PC-3 (cell line): ENCODE measurements at regions of chr11 and their contacts with region 1.

Region 1: GRCh38 chr11:102614485-102614884 is 10.6 kb downstream of the MMP20 start:
- DNase-seq: peak; percentile 35
- ATAC-seq: no peak
- H3K4me3 ChIP-seq: no peak overlapping the region
- H3K27ac ChIP-seq: no peak overlapping the region
- H3K4me1 ChIP-seq: peaks cover 6% of the 10 kb centered on the region
- H3K27me3 ChIP-seq: no peaks in the 10 kb centered on the region
- CTCF ChIP-seq: peak; percentile 53; the same call in 1 of the 2 replicates

Region 2: DNA sequence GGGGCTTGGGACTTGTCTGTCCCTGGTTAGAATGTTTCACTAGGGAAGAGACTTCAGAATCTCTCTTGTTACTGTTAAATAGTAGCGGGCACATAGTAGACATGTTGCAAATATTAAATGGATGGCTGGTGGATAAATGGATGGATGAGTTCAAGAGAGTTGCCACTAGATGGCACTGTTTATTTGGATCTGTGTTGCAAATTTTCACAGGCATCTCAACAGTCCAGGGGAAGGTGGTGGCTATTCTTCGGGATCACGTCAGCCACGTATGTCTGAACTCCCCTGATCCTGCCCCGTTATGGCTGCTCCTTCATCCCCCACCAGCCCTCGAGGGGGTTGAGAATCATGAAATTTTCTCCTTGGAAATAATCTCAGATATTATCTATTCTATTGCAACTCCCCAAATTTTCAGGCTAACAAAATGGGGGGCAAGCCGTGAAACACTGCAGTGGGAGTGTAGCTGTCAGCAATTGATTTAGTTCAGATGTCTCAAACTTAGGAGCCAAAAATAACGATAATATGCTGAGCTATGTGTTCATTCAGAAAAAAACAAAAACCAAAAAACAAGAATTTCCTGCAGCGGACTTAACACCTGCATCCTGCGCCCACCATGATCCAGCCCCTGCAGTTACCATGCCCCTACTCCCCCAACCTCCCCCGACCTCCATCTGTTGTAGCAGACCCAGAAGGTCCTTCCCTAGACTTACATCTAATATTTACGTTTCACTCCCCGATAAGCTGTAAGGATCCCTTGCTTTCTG is 326.3 kb before region 1 on chr11:
- CTCF ChIA-PET with region 1: no interaction called
- POLR2A ChIA-PET with region 1: no interaction called
- intact Hi-C with region 1: loop called (anchors 1 kb)
- DNase-seq: peak; percentile 96
- ATAC-seq: peak; percentile 70
- H3K4me3 ChIP-seq: peak overlapping the region; percentile 52
- H3K27ac ChIP-seq: peak overlapping the region; percentile 13
- H3K4me1 ChIP-seq: peaks cover 40% of the 10 kb centered on the region
- H3K27me3 ChIP-seq: no peaks in the 10 kb centered on the region
- CTCF ChIP-seq: peak; percentile 93

Region 3: GRCh38 chr11:102367364-102367763 is 247.1 kb before region 1 on chr11:
- CTCF ChIA-PET with region 1: interaction called, 6 read pairs
- POLR2A ChIA-PET with region 1: no interaction called
- intact Hi-C with region 1: loop called (anchors 2 kb)
- DNase-seq: peak; percentile 59
- ATAC-seq: peak; percentile 37; the same call in 1 of the 2 replicates
- H3K4me3 ChIP-seq: no peak overlapping the region
- H3K27ac ChIP-seq: no peak overlapping the region
- H3K4me1 ChIP-seq: no peaks in the 10 kb centered on the region
- H3K27me3 ChIP-seq: no peaks in the 10 kb centered on the region
- CTCF ChIP-seq: peak; percentile 64

Region 4: GRCh38 chr11:102451681-102452460 is 162.6 kb before region 1 on chr11:
- CTCF ChIA-PET with region 1: no interaction called
- POLR2A ChIA-PET with region 1: no interaction called
- intact Hi-C with region 1: loop called (anchors 5 kb)
- DNase-seq: peak; percentile 67
- ATAC-seq: peak; percentile 49
- H3K4me3 ChIP-seq: peak overlapping the region; percentile 81
- H3K27ac ChIP-seq: peak overlapping the region; percentile 65
- H3K4me1 ChIP-seq: peaks cover 56% of the 10 kb centered on the region
- H3K27me3 ChIP-seq: no peaks in the 10 kb centered on the region
- CTCF ChIP-seq: peak; percentile 44; the same call in 1 of the 2 replicates

Region 5: DNA sequence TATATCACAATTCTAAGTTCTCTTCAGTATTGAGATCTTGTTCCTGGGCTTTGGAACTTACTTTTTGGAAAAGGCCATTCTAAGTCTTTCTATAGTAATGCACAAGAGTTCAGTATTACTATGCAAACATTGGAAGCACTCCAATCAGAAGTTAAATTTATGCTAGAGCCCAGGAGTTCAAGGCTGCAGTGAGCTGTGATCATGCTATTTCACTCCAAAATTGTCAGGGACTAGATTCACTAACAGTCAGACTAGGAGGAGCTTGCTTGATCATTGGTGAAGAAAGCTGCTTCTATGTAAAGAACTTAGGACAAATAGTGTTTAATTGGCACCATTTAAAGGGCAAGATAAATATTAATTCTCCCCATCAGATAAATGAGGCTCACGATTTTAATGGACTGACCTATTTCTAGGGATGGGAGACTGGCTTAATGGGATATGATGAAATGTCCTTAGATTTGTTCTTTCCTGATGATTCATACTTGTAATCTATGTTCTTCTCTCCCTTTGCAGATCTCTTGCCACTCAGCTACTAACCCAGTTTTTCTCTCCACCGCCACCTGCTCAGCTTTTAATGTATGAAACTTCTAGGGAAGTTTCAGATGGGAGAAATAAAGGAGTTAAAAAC is 129.3 kb before region 1 on chr11:
- CTCF ChIA-PET with region 1: no interaction called
- POLR2A ChIA-PET with region 1: no interaction called
- intact Hi-C with region 1: no loop called
- DNase-seq: no peak
- ATAC-seq: peak; percentile 61
- H3K4me3 ChIP-seq: no peak overlapping the region
- H3K27ac ChIP-seq: no peak overlapping the region
- H3K4me1 ChIP-seq: peaks cover 15% of the 10 kb centered on the region; the same call in 1 of the 2 replicates
- H3K27me3 ChIP-seq: no peaks in the 10 kb centered on the region
- CTCF ChIP-seq: no peak

Region 6: GRCh38 chr11:102630598-102631448 is 16.3 kb after region 1 on chr11:
- CTCF ChIA-PET with region 1: no interaction called
- POLR2A ChIA-PET with region 1: no interaction called
- intact Hi-C with region 1: no loop called
- DNase-seq: no peak
- ATAC-seq: no peak
- H3K4me3 ChIP-seq: no peak overlapping the region
- H3K27ac ChIP-seq: no peak overlapping the region
- H3K4me1 ChIP-seq: peaks cover 3% of the 10 kb centered on the region; the same call in 1 of the 2 replicates
- H3K27me3 ChIP-seq: no peaks in the 10 kb centered on the region
- CTCF ChIP-seq: no peak

Region 7: DNA sequence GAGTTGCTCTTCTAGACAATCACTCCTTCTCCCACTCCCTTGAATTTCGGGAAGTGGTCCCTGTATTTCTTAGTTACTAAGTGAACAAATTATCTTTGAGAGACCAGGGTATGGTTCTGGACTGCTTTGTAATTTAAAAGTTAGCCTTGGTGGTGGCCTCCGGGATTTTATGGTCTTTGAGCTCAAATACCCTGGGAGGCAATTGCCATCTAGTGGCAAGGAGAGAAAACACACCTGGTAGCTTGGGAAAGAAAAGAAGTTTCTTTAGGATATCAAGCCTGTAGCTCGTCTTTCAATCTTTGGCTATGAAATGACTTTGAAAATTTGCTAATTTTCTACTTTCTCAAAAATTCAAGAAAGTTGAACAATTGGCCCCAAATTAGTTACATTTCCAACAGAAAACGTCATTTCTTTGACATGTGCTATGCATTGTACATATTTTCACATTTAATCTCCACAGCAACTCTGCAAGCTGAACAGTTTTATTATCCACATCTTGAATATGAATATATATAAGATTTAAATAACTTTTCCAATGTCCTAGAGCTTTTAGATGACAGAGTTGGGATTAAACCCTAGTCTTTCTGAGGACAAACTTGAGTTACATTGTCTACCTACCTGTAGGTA is 52.0 kb after region 1 on chr11:
- CTCF ChIA-PET with region 1: interaction called, 37 read pairs
- POLR2A ChIA-PET with region 1: interaction called, 3 read pairs
- intact Hi-C with region 1: loop called (anchors 2 kb)
- DNase-seq: peak; percentile 79
- ATAC-seq: peak; percentile 67
- H3K4me3 ChIP-seq: no peak overlapping the region
- H3K27ac ChIP-seq: no peak overlapping the region
- H3K4me1 ChIP-seq: no peaks in the 10 kb centered on the region
- H3K27me3 ChIP-seq: no peaks in the 10 kb centered on the region
- CTCF ChIP-seq: peak; percentile 97